CD8-positive, alpha-beta T cell (primary cell): ENCODE measurements at regions of chr11 and their contacts with region 1.

Region 1: GRCh38 chr11:58567889-58568512 is 7.7 kb downstream of the LPXN start:
- DNase-seq: peak; percentile 59 to 90 (median 81)
- ATAC-seq: peak; percentile 100
- H3K4me3 ChIP-seq: no peak overlapping the region
- H3K4me3 Mint-ChIP-seq: peak overlapping the region; percentile 40
- H3K27ac ChIP-seq: peak overlapping the region in 1 of 2 experiments; percentile 6
- H3K27ac Mint-ChIP-seq: peak overlapping the region; percentile 85
- H3K4me1 ChIP-seq: peaks cover 61% of the 10 kb centered on the region
- H3K4me1 Mint-ChIP-seq: peaks cover 70% of the 10 kb centered on the region
- H3K27me3 ChIP-seq: no peaks in the 10 kb centered on the region
- H3K27me3 Mint-ChIP-seq: no peaks in the 10 kb centered on the region
- CTCF ChIP-seq: peak; percentile 87

Region 2: GRCh38 chr11:58524232-58525036 is 43.6 kb before region 1 on chr11:
- CTCF ChIA-PET with region 1: interaction called, 48 read pairs
- POLR2A ChIA-PET with region 1: interaction called, 8 read pairs
- intact Hi-C with region 1: no loop called
- DNase-seq: peak in 8 of 9 experiments; percentile 17 to 85 (median 54)
- ATAC-seq: peak; percentile 71
- H3K4me3 ChIP-seq: peak overlapping the region in 1 of 2 experiments; percentile 24
- H3K4me3 Mint-ChIP-seq: peak overlapping the region; percentile 75
- H3K27ac ChIP-seq: peak overlapping the region; percentile 75 to 80
- H3K27ac Mint-ChIP-seq: peak overlapping the region; percentile 96
- H3K4me1 ChIP-seq: peaks cover 65% of the 10 kb centered on the region
- H3K4me1 Mint-ChIP-seq: peaks cover 69% of the 10 kb centered on the region
- H3K27me3 ChIP-seq: no peaks in the 10 kb centered on the region
- H3K27me3 Mint-ChIP-seq: no peaks in the 10 kb centered on the region
- CTCF ChIP-seq: peak; percentile 90

Region 3: DNA sequence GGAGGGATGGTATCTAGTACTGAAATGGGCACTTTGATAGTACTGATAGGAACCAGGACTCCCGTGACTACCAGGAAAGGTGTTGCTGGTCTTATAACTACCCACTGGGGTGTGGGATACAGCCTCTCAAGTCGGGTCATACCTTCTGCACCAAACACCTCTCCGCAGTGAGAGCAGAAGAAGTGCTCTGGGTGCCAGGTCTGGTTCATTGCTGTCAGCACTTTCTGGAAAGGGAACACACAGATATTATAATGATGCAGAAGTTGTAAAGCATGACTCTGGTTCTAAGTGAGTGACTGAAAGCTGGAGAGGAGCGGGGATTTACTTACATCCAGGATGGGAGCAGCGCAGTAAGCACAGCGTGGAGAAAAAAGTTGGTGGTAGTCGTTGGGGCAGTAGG is 18.4 kb before region 1 on chr11:
- CTCF ChIA-PET with region 1: interaction called, 10 read pairs
- POLR2A ChIA-PET with region 1: interaction called, 6 read pairs
- intact Hi-C with region 1: loop called in 1 of 2 experiments (anchors 2 kb)
- DNase-seq: no peak
- ATAC-seq: no peak
- H3K4me3 ChIP-seq: no peak overlapping the region
- H3K4me3 Mint-ChIP-seq: no peak overlapping the region
- H3K27ac ChIP-seq: no peak overlapping the region
- H3K27ac Mint-ChIP-seq: no peak overlapping the region
- H3K4me1 ChIP-seq: no peaks in the 10 kb centered on the region
- H3K4me1 Mint-ChIP-seq: peaks cover 22% of the 10 kb centered on the region
- H3K27me3 ChIP-seq: no peaks in the 10 kb centered on the region
- H3K27me3 Mint-ChIP-seq: no peaks in the 10 kb centered on the region
- CTCF ChIP-seq: no peak

Region 4: DNA sequence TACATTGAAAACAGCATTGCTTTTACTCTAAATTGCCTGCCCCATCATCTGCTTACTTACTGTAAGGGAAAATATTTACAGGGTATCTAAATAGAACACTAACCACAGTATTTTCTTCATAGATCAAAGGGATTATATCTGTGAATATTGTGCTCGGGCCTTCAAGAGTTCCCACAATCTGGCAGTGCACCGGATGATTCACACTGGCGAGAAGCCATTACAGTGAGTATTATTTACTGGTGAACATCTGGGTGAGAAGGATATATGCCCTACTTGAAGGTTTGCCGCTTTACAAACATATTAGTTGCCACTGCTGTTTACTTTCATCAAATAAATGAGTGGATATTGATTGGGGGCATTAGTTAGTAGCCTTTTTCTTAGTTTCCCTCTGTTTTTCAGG is 48.6 kb after region 1 on chr11:
- CTCF ChIA-PET with region 1: interaction called, 19 read pairs
- POLR2A ChIA-PET with region 1: no interaction called
- intact Hi-C with region 1: loop called (anchors 5 kb)
- DNase-seq: no peak
- ATAC-seq: no peak
- H3K4me3 ChIP-seq: no peak overlapping the region
- H3K4me3 Mint-ChIP-seq: no peak overlapping the region
- H3K27ac ChIP-seq: no peak overlapping the region
- H3K27ac Mint-ChIP-seq: no peak overlapping the region
- H3K4me1 ChIP-seq: peaks cover 7% of the 10 kb centered on the region
- H3K4me1 Mint-ChIP-seq: peaks cover 6% of the 10 kb centered on the region
- H3K27me3 ChIP-seq: no peaks in the 10 kb centered on the region
- H3K27me3 Mint-ChIP-seq: no peaks in the 10 kb centered on the region
- CTCF ChIP-seq: no peak

Region 5: GRCh38 chr11:58640386-58641023 is 72.5 kb after region 1 on chr11:
- CTCF ChIA-PET with region 1: interaction called, 11 read pairs
- POLR2A ChIA-PET with region 1: no interaction called
- intact Hi-C with region 1: no loop called
- DNase-seq: peak in 3 of 9 experiments; percentile 32 to 63 (median 58)
- ATAC-seq: peak; percentile 70
- H3K4me3 ChIP-seq: no peak overlapping the region
- H3K4me3 Mint-ChIP-seq: no peak overlapping the region
- H3K27ac ChIP-seq: peak overlapping the region in 1 of 2 experiments; percentile 34
- H3K27ac Mint-ChIP-seq: peak overlapping the region; percentile 84
- H3K4me1 ChIP-seq: peaks cover 19% of the 10 kb centered on the region
- H3K4me1 Mint-ChIP-seq: peaks cover 27% of the 10 kb centered on the region
- H3K27me3 ChIP-seq: no peaks in the 10 kb centered on the region
- H3K27me3 Mint-ChIP-seq: no peaks in the 10 kb centered on the region
- CTCF ChIP-seq: no peak

Region 6: GRCh38 chr11:58675334-58676155 is 107.5 kb after region 1 on chr11:
- CTCF ChIA-PET with region 1: interaction called, 12 read pairs
- POLR2A ChIA-PET with region 1: no interaction called
- intact Hi-C with region 1: no loop called
- DNase-seq: peak; percentile 46 to 86 (median 72)
- ATAC-seq: peak; percentile 80
- H3K4me3 ChIP-seq: no peak overlapping the region
- H3K4me3 Mint-ChIP-seq: no peak overlapping the region
- H3K27ac ChIP-seq: no peak overlapping the region
- H3K27ac Mint-ChIP-seq: no peak overlapping the region
- H3K4me1 ChIP-seq: no peaks in the 10 kb centered on the region
- H3K4me1 Mint-ChIP-seq: no peaks in the 10 kb centered on the region
- H3K27me3 ChIP-seq: no peaks in the 10 kb centered on the region
- H3K27me3 Mint-ChIP-seq: no peaks in the 10 kb centered on the region
- CTCF ChIP-seq: peak; percentile 93